IMR-90 (cell line): ENCODE measurements at regions of chr6 and their contacts with region 1.

Region 1: DNA sequence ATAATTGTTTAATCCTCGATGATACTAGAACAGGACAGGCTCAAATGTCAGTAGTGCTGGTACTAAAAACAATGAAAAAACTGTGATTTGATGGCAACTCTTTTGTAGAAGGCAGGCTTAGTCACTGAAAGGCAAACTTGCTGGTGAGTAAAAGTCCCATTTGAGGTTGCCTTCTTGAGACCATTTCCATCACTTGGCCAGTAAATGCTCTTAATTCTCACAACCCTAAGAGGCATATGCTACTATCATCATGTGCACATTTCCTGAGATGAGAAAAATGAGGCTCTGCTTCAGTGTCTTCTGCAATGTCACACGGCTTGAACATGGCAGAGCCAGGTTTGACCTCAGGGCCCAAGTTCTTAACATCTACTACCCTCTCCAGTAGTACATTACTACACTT is 9.9 kb downstream of the AKIRIN2 start:
- DNase-seq: no peak
- ATAC-seq: no peak
- H3K4me3 ChIP-seq: no peak overlapping the region
- H3K27ac ChIP-seq: no peak overlapping the region
- H3K4me1 ChIP-seq: peaks cover 24% of the 10 kb centered on the region
- H3K27me3 ChIP-seq: no peaks in the 10 kb centered on the region
- CTCF ChIP-seq: no peak
- POLR2A ChIP-seq: no peak
- RAD21 ChIP-seq: no peak

Region 2: GRCh38 chr6:87716928-87717614 is 25.0 kb after region 1 on chr6:
- CTCF ChIA-PET with region 1: no interaction called
- POLR2A ChIA-PET with region 1: no interaction called
- dilution Hi-C with region 1: no loop called
- in situ Hi-C with region 1: no loop called
- intact Hi-C with region 1: no loop called
- DNase-seq: no peak
- ATAC-seq: no peak
- H3K4me3 ChIP-seq: no peak overlapping the region
- H3K27ac ChIP-seq: no peak overlapping the region
- H3K4me1 ChIP-seq: peaks cover 11% of the 10 kb centered on the region
- H3K27me3 ChIP-seq: no peaks in the 10 kb centered on the region
- CTCF ChIP-seq: no peak
- POLR2A ChIP-seq: no peak
- RAD21 ChIP-seq: no peak

Region 3: GRCh38 chr6:88268508-88268907 is 576.4 kb after region 1 on chr6:
- CTCF ChIA-PET with region 1: no interaction called
- POLR2A ChIA-PET with region 1: no interaction called
- dilution Hi-C with region 1: no loop called
- in situ Hi-C with region 1: no loop called
- intact Hi-C with region 1: no loop called
- DNase-seq: no peak
- ATAC-seq: no peak
- H3K4me3 ChIP-seq: no peak overlapping the region
- H3K27ac ChIP-seq: no peak overlapping the region
- H3K4me1 ChIP-seq: no peaks in the 10 kb centered on the region
- H3K27me3 ChIP-seq: no peaks in the 10 kb centered on the region
- CTCF ChIP-seq: no peak
- POLR2A ChIP-seq: no peak
- RAD21 ChIP-seq: no peak

Region 4: GRCh38 chr6:88722686-88723085 is 1030.6 kb after region 1 on chr6:
- CTCF ChIA-PET with region 1: no interaction called
- POLR2A ChIA-PET with region 1: interaction called, 20 read pairs
- dilution Hi-C with region 1: no loop called
- in situ Hi-C with region 1: no loop called
- intact Hi-C with region 1: no loop called
- DNase-seq: peak; percentile 70
- ATAC-seq: peak; percentile 63
- H3K4me3 ChIP-seq: no peak overlapping the region
- H3K27ac ChIP-seq: no peak overlapping the region
- H3K4me1 ChIP-seq: peaks cover 4% of the 10 kb centered on the region; the same call in 1 of the 2 replicates
- H3K27me3 ChIP-seq: no peaks in the 10 kb centered on the region
- CTCF ChIP-seq: no peak
- POLR2A ChIP-seq: no peak
- RAD21 ChIP-seq: no peak